ENCODE measurements at regions of chr9 and their contacts with region 1.

Region 1: DNA sequence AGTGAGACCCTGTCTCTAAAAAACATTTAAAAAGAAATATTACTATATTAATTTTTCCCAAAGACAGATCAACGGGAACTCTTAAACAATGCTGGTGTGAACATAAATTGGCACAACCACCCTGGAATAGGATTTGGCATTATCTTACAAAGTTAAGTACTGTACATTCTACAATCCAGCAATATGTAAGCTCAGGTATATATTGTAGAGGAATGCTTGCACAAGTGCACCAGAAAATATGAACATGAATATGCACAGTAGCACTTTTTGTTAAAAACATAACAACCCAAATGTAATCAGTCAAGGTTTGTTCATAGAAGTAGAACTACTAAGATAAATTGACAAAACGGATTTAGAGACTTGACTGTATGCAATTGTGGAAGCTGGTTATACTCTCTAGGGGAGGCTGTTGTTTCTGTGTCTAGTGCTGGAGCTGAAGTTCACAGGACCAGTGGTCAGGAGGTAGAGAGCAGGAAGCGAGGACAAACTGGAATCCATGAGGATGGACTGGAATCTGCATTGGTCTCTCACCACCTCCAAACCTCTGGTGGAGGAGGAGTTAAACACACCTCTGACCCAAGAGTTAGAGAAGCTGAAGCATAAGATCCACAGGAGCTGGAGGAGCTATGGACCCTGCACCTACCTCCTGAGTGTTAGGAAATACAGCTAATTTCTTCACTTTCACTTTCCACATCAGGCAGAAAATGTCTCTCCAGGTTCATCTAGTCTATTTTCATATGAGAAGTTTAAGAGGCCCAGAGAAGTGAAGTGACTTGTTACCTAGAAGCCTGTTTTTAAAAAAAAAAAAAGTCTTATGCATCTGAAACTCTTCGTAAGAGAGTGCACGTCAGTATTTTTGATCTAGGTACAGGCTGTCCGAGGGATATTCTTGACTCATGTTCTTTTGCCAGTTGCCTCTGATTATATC is 20.3 kb upstream of the RIC1 start:
- DNase-seq: peak in 3 of 9 donors; percentile 8 to 23 (median 21)
- ATAC-seq: peak; percentile 55
- H3K4me3 ChIP-seq: peak overlapping the region; percentile 39
- H3K4me3 Mint-ChIP-seq: peak overlapping the region; percentile 69 to 88 (median 82)
- H3K27ac ChIP-seq: peak overlapping the region; percentile 47
- H3K27ac Mint-ChIP-seq: peak overlapping the region; percentile 53 to 93 (median 86)
- H3K4me1 ChIP-seq: peaks cover 0 to 6% of the 10 kb centered on the region in 2 donors
- H3K4me1 Mint-ChIP-seq: peaks cover 7 to 51% (median 42%) of the 10 kb centered on the region in 7 donors
- H3K27me3 ChIP-seq: no peaks in the 10 kb centered on the region
- H3K27me3 Mint-ChIP-seq: no peaks in the 10 kb centered on the region

Region 2: DNA sequence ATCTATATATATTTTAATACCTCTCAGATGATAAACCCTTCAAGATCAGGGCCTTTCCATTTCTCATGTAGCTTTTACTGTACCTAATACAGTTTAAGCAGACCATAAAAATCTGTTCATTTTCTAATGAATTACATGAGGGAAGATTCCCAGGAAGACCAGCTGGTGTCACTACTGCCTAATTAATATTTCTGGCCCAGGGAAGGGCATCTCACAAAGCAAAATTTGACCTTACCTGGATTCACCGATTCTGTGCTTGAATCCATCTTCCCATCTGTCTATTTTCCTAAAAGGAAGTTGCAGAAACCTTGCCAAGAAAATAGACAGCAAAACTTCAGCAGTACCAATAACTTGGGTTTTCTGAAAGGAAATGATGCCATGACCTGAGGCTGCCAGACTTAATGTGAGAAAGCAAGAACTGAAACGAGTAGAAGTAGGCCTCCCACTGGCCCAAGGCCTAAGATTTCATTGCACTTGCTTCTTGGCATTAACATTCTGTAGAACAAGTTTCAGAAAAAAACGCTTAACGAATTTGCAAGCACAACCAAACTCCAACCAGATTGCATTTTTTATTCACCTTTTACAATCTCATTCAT is 1225.7 kb before region 1 on chr9:
- CTCF ChIA-PET with region 1: no interaction called
- POLR2A ChIA-PET with region 1: no interaction called
- intact Hi-C with region 1: loop called in 1 of 2 experiments (anchors 5 kb)
- DNase-seq: peak in 6 of 9 donors; percentile 7 to 54 (median 42)
- ATAC-seq: no peak
- H3K4me3 ChIP-seq: no peak overlapping the region
- H3K4me3 Mint-ChIP-seq: no peak overlapping the region
- H3K27ac ChIP-seq: no peak overlapping the region
- H3K27ac Mint-ChIP-seq: no peak overlapping the region
- H3K4me1 ChIP-seq: no peaks in the 10 kb centered on the region
- H3K4me1 Mint-ChIP-seq: peaks cover 0 to 10% (median 0%) of the 10 kb centered on the region in 7 donors
- H3K27me3 ChIP-seq: no peaks in the 10 kb centered on the region
- H3K27me3 Mint-ChIP-seq: peaks cover 0 to 4% (median 0%) of the 10 kb centered on the region in 5 donors

Region 3: GRCh38 chr9:5375091-5375490 is 233.5 kb before region 1 on chr9:
- CTCF ChIA-PET with region 1: no interaction called
- POLR2A ChIA-PET with region 1: no interaction called
- intact Hi-C with region 1: no loop called
- DNase-seq: peak in 1 of 9 donors; percentile 31
- ATAC-seq: no peak
- H3K4me3 ChIP-seq: no peak overlapping the region
- H3K4me3 Mint-ChIP-seq: peak overlapping the region in 4 of 10 donors; percentile 3 to 48 (median 8)
- H3K27ac ChIP-seq: no peak overlapping the region
- H3K27ac Mint-ChIP-seq: peak overlapping the region in 5 of 9 donors; percentile 2 to 56 (median 3)
- H3K4me1 ChIP-seq: peaks cover 0 to 3% of the 10 kb centered on the region in 2 donors
- H3K4me1 Mint-ChIP-seq: peaks cover 23 to 39% (median 33%) of the 10 kb centered on the region in 7 donors
- H3K27me3 ChIP-seq: no peaks in the 10 kb centered on the region
- H3K27me3 Mint-ChIP-seq: no peaks in the 10 kb centered on the region